Posterior vena cava (tissue), 2 donors: ENCODE measurements at regions of chr10 and their contacts with region 1.

Region 1: GRCh38 chr10:74826142-74827044 is at the start of gene KAT6B:
- DNase-seq: peak; percentile 100
- total RNA-seq, gene KAT6B: 34.7 to 35.0 TPM

Region 2: DNA sequence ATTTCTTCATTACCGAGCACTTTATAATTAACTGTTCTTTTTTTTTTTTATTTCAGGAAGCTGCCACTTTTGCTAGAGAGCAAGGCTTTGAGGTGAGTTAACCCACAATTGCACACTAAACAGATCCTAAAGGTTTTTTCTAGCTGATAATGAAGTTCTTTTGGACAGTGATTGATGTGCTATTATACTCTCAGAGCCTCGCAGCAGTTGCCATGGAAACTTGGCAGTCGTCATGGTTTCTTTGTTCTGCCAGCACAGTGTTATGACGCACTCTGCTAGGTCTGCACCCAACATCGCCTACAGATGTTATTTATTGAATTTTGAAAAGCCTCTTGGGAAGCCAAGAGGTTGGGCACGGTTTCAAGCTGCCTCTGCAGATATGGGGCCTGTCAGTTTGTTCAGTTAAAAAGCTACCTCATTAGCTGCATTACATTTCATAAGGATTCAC is 237.1 kb before region 1 on chr10:
- intact Hi-C with region 1: loop called in 1 of 2 experiments (anchors 10 kb)
- DNase-seq: peak; percentile 92

Region 3: GRCh38 chr10:74991440-74992130 is 165.2 kb after region 1 on chr10:
- intact Hi-C with region 1: loop called in 1 of 2 experiments (anchors 10 kb)
- DNase-seq: no peak

Region 4: GRCh38 chr10:76509446-76509845 is 1683.1 kb after region 1 on chr10:
- intact Hi-C with region 1: loop called in 1 of 2 experiments (anchors 10 kb)
- DNase-seq: no peak